ENCODE measurements at regions of chr5 and their contacts with region 1.

Region 1: DNA sequence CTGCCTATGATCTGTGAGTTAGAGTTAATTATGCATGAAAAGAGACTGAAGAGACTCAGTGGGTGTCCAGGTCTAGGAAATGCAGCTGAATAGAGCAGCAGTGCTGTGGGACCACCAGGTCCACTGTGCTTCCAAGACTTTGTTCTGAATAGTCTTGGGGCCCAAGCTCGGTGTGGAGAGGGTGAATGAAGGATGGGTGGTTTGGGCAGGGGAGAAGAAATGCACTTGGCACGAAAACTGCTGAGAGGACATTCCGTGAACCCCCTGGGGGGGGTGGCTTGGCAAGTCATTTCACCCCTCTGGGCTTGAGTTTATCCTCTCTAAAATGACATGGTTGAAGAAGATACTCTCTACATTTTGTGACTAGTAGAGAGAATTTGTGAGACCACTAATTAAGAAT is 36.0 kb upstream of the GOLPH3 start:
- DNase-seq: no peak
- ATAC-seq: no peak
- H3K4me3 ChIP-seq: no peak overlapping the region
- H3K4me3 Mint-ChIP-seq: peak overlapping the region; percentile 18
- H3K27ac ChIP-seq: peak overlapping the region in 1 of 2 donors; percentile 77
- H3K27ac Mint-ChIP-seq: peak overlapping the region; percentile 73
- H3K4me1 ChIP-seq: peaks cover 12 to 18% of the 10 kb centered on the region in 2 donors
- H3K4me1 Mint-ChIP-seq: peaks cover 20% of the 10 kb centered on the region
- H3K27me3 ChIP-seq: no peaks in the 10 kb centered on the region
- H3K27me3 Mint-ChIP-seq: no peaks in the 10 kb centered on the region
- CTCF ChIP-seq: no peak

Region 2: GRCh38 chr5:32174011-32174870 is 35.9 kb before region 1 on chr5 and contains the start of gene GOLPH3:
- CTCF ChIA-PET with region 1: no interaction called
- POLR2A ChIA-PET with region 1: interaction called, 7 read pairs
- intact Hi-C with region 1: loop called (anchors 2 kb)
- DNase-seq: peak; percentile 91
- ATAC-seq: peak; percentile 85
- H3K4me3 ChIP-seq: peak within 1 kb of the TSS; percentile 65 to 92 (median 80)
- H3K4me3 Mint-ChIP-seq: peak within 1 kb of the TSS; percentile 96
- H3K27ac ChIP-seq: peak within 1 kb of the TSS; percentile 95 to 97
- H3K27ac Mint-ChIP-seq: peak within 1 kb of the TSS; percentile 96
- H3K4me1 ChIP-seq: peaks cover 13 to 19% of the 10 kb centered on the region in 2 donors
- H3K4me1 Mint-ChIP-seq: peaks cover 36% of the 10 kb centered on the region
- H3K27me3 ChIP-seq: no peaks in the 10 kb centered on the region
- H3K27me3 Mint-ChIP-seq: no peaks in the 10 kb centered on the region
- CTCF ChIP-seq: no peak
- total RNA-seq, gene GOLPH3: 58.8 and 62.6 TPM in 2 replicates

Measured in B cell (primary cell).